ENCODE measurements at regions of chr9 and their contacts with region 1.

Region 1: DNA sequence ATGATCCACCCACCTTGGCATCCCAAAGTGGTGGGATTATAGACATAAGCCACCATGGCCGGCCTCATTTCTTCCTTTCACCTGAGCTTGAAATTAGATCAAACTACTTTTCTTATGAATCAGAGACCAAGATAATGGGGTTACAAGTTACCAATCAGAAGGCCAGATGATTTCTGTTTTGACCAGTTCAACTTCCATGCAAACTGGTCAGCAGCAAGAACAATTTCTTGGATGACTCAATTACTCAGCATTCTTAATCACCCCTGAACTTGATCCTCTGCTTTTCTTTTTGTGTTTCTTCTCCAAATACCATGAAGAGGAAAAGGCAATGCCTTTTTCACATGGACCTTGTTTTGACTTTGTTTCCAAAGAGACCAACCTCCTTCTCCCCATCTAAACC is 10.0 kb upstream of the PLIN2 start:
- DNase-seq: no peak
- ATAC-seq: no peak
- H3K4me3 ChIP-seq: no peak overlapping the region
- H3K27ac ChIP-seq: no peak overlapping the region
- H3K4me1 ChIP-seq: peaks cover 0 to 9% of the 10 kb centered on the region in 2 experiments; a peak in 2 of 5 replicates
- H3K27me3 ChIP-seq: no peaks in the 10 kb centered on the region
- CTCF ChIP-seq: no peak
- EP300 ChIP-seq: no peak
- POLR2A ChIP-seq: no peak
- RAD21 ChIP-seq: no peak

Region 2: GRCh38 chr9:19122490-19123042 is 14.7 kb before region 1 on chr9:
- CTCF ChIA-PET with region 1: no interaction called
- POLR2A ChIA-PET with region 1: interaction called, 11 read pairs
- in situ Hi-C with region 1: no loop called
- intact Hi-C with region 1: no loop called
- DNase-seq: no peak
- ATAC-seq: no peak
- H3K4me3 ChIP-seq: no peak overlapping the region
- H3K27ac ChIP-seq: no peak overlapping the region
- H3K4me1 ChIP-seq: peaks cover 15 to 17% of the 10 kb centered on the region in 2 experiments; a peak in 4 of 5 replicates
- H3K27me3 ChIP-seq: no peaks in the 10 kb centered on the region
- CTCF ChIP-seq: no peak
- EP300 ChIP-seq: no peak
- POLR2A ChIP-seq: no peak
- RAD21 ChIP-seq: no peak

Measured in K562 (cell line).